Dorsolateral prefrontal cortex (tissue), 120 donors: ENCODE measurements at regions of chr9 and their contacts with region 1.

Region 1: DNA sequence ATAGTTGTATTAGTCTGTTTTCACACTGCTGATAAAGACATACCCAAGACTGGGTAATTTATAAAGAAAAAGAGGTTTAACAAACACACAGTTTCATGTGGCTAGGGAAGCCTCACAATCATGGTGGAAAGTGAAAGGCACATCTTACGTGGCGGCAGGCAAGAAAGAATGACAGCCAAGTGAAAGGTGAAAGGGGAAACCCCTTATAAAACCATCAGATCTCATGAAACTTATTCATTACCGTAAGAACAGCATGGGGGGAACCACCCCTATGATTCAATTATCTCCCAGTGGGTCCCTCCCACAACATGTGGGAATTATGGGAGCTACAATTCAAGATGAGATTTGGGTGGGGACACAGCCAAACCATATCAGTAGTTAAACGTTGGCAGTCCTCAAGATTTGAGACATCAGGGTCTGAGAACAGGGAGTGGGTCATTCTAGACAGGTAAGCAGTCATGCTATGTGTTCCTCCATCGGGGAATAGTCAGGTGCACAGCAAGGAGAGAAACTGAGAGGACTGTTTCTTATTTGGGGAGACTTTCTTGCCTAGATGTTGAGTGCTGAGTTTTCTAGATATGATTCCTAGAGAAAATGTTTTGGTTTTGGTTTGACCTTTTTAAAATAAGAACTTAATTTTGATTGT is 45.8 kb upstream of the ENTREP1 start:
- DNase-seq: no peak
- H3K4me3 ChIP-seq: no peak overlapping the region
- H3K27ac ChIP-seq: no peak overlapping the region
- H3K27me3 ChIP-seq: peaks cover 0 to 2% (median 0%) of the 10 kb centered on the region in 45 donors
- CTCF ChIP-seq: no peak

Region 2: DNA sequence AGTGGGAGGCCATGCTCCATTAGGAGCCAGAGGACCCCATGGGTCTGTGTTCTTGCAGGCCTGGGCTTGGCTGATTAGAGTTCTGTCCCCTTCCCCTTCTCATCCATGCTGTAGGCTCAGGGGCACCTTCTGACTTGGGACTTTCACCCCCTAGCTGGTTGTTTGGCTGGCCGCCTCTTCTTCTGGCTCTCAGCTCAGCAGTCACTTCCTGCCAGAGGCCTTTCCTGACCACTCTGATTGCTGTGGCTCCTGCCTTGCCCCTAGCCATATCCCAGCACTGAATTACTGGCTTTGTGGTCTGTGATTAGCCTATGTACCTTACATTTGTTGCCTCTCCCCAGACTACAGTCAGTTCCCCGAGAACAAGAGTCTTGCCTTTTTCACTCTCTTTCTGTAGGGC is 60.4 kb after region 1 on chr9:
- intact Hi-C with region 1: loop called in 1 of 2 experiments (anchors 10 kb)
- DNase-seq: no peak
- H3K4me3 ChIP-seq: no peak overlapping the region
- H3K27ac ChIP-seq: no peak overlapping the region
- H3K27me3 ChIP-seq: no peaks in the 10 kb centered on the region
- CTCF ChIP-seq: no peak

Region 3: GRCh38 chr9:69412741-69413150 is 133.5 kb after region 1 on chr9:
- intact Hi-C with region 1: no loop called
- DNase-seq: peak in 9 of 10 donors; percentile 41 to 70 (median 59)
- H3K4me3 ChIP-seq: peak overlapping the region in 22 of 59 donors; percentile 6 to 44 (median 22)
- H3K27ac ChIP-seq: no peak overlapping the region
- H3K27me3 ChIP-seq: no peaks in the 10 kb centered on the region
- CTCF ChIP-seq: peak; percentile 25 to 75 (median 58)